A673 (cell line): ENCODE measurements at regions of chr14 and their contacts with region 1.

Region 1: GRCh38 chr14:62126879-62127478 is 364.8 kb downstream of the SNAPC1 start:
- DNase-seq: peak; percentile 72
- H3K4me3 ChIP-seq: no peak overlapping the region
- H3K27ac ChIP-seq: no peak overlapping the region
- H3K4me1 ChIP-seq: no peaks in the 10 kb centered on the region
- H3K27me3 ChIP-seq: no peaks in the 10 kb centered on the region
- CTCF ChIP-seq: peak; percentile 83

Region 2: DNA sequence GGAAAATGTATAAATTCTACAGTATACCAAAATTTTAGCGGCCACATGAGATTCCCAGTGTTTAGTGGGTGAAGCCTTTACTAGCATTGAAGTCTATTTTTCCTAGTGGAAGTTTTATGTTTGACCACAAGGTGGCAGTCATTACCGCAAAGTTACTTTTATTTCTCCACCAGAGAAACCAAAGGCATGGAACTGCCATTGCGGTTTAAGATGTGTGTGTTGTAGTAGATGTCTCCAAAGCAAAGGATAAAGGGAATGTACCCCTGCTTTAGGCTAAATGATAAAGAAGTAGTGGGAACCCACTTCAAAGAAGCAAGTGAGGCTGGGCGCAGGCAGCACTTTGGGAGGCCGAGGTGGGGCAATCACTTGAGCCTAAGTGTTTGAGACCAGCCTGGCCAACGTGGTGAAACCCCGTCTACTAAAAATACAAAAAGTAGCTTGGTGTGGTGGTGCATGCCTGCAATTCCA is 665.1 kb before region 1 on chr14:
- CTCF ChIA-PET with region 1: no interaction called
- POLR2A ChIA-PET with region 1: no interaction called
- intact Hi-C with region 1: loop called (anchors 2 kb)
- DNase-seq: peak; percentile 80
- H3K4me3 ChIP-seq: no peak overlapping the region
- H3K27ac ChIP-seq: no peak overlapping the region
- H3K4me1 ChIP-seq: peaks cover 14% of the 10 kb centered on the region
- H3K27me3 ChIP-seq: no peaks in the 10 kb centered on the region
- CTCF ChIP-seq: peak; percentile 76

Region 3: DNA sequence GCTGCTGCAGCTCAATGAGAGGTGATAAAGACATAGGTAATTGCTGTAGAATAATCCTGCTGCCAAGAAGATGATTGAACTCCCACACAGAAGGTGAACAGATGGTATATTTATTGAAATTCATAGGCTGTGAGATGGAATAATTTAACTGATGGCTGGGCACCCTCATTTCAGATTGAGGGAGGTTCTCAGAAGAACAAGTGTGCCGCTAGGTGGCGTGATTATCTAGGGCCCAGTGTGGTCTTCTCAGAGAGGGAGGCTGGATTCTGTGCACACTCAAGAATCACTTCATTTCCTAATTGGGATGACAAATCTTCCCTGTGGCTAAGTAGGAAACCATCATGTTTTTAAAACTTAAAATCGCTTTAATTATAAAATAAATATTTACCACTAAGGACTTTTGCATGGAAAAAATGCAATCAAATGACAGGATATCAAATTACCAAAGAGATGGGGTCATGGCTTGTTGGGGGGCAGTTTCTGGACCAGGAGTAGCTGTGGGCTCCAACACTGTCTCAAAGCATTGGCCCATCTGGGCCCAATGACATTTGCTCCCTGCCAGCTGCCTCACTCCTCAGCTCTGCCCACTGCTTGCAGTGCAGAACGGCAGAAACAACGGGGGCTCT is 232.4 kb before region 1 on chr14:
- CTCF ChIA-PET with region 1: interaction called, 3 read pairs
- POLR2A ChIA-PET with region 1: no interaction called
- intact Hi-C with region 1: loop called (anchors 2 kb)
- DNase-seq: peak; percentile 79
- H3K4me3 ChIP-seq: no peak overlapping the region
- H3K27ac ChIP-seq: no peak overlapping the region
- H3K4me1 ChIP-seq: no peaks in the 10 kb centered on the region
- H3K27me3 ChIP-seq: no peaks in the 10 kb centered on the region
- CTCF ChIP-seq: peak; percentile 90

Region 4: DNA sequence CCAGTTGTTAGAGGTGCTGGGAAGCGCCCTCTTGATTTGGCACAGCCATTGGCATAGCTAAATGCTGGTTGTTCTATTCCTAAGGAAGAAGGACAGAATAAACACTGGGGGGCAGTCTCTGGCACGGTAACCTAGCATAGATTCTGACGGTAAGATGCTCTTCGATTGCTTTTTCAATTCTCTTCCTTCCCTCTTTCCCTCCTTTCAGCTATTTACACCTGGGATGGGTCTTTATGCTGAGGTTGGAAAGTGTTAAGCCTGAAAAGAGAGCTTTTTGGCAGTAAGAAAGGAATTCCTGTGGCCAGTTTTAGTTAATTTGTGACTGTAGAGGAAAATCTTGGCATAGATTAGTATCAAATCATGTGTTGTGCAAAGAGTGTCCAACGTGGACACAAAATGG is 201.9 kb before region 1 on chr14:
- CTCF ChIA-PET with region 1: interaction called, 21 read pairs
- POLR2A ChIA-PET with region 1: no interaction called
- intact Hi-C with region 1: loop called (anchors 2 kb)
- DNase-seq: peak; percentile 41
- H3K4me3 ChIP-seq: no peak overlapping the region
- H3K27ac ChIP-seq: no peak overlapping the region
- H3K4me1 ChIP-seq: no peaks in the 10 kb centered on the region
- H3K27me3 ChIP-seq: no peaks in the 10 kb centered on the region
- CTCF ChIP-seq: peak; percentile 53

Region 5: DNA sequence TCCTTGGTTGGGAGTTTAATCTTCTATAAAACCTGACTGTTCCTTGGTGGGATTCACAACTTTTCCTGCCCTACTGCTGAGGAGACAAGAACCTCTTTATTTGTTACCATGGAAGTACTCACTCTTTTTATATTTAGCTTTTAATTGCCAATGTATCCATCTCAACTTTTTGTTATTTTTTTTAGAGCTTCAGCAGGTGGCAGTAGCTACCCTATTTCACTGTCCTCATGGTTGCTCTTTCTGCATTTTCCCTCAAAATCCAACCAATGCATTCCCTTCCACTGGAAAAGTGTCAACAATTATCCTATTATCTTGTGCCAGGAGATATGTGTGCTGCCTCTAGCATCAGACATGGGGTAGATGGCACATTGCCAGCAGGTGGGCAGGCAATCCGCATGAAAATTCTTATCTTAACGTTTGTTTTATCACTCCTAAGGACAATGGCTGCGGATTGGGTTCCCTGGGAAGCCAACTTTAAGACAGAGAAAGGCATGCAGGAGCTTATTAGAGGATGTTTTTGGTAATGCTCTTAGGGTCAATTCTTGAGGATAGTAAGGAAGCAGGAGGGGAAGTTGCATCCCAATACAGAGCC is 41.7 kb after region 1 on chr14:
- CTCF ChIA-PET with region 1: no interaction called
- POLR2A ChIA-PET with region 1: no interaction called
- intact Hi-C with region 1: no loop called
- DNase-seq: peak; percentile 52
- H3K4me3 ChIP-seq: no peak overlapping the region
- H3K27ac ChIP-seq: no peak overlapping the region
- H3K4me1 ChIP-seq: peaks cover 5% of the 10 kb centered on the region
- H3K27me3 ChIP-seq: no peaks in the 10 kb centered on the region
- CTCF ChIP-seq: peak; percentile 49

Region 6: GRCh38 chr14:63039800-63040380 is 912.9 kb after region 1 on chr14:
- CTCF ChIA-PET with region 1: no interaction called
- POLR2A ChIA-PET with region 1: no interaction called
- intact Hi-C with region 1: no loop called
- DNase-seq: peak; percentile 82
- H3K4me3 ChIP-seq: no peak overlapping the region
- H3K27ac ChIP-seq: peak overlapping the region; percentile 63
- H3K4me1 ChIP-seq: peaks cover 39% of the 10 kb centered on the region
- H3K27me3 ChIP-seq: no peaks in the 10 kb centered on the region
- CTCF ChIP-seq: peak; percentile 61